ENCODE measurements at regions of chr1 and their contacts with region 1.

Region 1: DNA sequence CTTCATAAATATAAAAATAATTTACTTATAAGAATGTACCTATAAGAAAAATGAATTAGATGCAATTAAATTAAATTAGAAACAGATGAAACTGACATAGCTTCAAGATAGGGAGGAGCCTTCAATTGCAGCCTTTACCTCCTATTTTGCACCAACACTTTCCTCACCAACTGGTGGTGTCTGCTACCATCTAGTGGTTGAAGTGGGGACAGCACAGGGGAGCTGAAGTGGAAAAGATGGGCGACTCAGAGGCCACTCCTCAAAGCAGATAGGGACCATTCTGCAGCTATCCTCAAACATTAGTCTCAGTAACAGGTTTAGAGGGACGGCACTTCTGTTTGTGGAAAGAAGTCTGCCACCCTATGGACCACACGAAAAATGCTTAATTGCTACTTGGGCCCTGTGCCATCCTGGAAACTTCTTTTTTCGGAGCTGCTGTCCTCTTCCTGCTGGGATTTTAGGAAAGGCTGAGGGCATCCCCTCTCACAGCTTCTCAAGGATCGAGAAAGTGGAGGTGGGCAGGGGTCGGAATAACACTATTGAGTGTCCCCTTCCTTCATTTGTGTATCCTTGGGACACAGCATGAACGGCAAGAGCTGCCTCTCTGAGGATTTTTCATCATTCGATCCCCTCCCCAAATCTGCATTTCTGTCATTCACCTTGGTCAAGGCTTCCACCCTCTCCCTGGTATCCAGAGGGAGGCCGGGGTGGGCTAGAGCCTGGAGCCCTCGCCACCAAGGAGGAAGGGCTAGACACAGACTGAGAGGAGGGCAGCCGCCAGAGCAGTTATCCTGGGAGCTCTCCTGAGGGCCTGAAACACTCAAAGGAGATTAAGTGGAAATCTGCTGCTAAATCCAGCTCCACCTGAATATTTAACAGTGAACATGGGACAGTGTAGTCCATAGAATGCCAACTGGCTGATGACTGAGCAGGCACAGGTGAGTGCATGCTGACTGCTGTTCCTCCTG is 9.6 kb downstream of the PROK1 start:
- DNase-seq: peak; percentile 87
- H3K4me3 ChIP-seq: no peak overlapping the region
- H3K27ac ChIP-seq: no peak overlapping the region
- H3K4me1 ChIP-seq: no peaks in the 10 kb centered on the region
- H3K27me3 ChIP-seq: no peaks in the 10 kb centered on the region
- CTCF ChIP-seq: peak; percentile 94 to 96 (median 95)
- EP300 ChIP-seq: no peak
- POLR2A ChIP-seq: no peak

Region 2: DNA sequence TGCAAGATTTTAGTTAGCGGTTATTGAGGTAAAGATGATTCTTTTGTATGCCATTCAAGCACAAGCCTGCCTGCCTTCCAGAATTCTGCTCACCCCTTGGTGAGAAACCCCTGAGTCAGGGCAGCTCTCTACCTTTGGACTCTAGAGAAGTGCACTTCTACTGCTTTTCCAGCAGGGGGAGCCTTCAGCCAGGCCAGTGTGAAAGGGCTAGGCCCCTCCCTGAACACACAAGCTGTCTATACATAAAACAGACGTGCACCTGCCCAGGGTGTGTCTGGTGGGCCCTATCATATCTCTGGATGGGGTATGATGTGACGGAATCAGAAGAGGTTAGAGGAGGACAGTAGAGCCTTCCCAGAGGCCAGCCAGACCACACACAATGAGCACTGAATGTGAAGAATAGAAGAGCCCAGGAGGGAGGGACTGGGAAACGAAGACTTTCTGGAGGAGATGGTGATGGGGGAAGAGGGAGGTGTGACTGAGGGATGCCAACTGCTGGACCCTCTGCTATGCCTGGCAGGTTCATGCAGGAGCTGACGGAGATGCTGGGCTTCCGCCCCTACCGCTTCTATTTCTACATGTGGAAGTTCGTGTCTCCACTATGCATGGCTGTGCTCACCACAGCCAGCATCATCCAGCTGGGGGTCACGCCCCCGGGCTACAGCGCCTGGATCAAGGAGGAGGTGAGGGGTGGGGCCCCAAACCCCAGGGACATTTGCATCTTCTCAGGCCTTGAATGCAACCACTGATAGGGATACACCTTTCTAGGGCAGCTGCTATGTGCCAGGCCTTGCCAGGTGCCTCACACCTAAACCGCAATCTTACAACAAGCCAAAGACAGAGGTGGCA is 263.4 kb before region 1 on chr1:
- in situ Hi-C with region 1: loop called (anchors 5 to 10 kb)
- intact Hi-C with region 1: loop called (anchors 2 kb)
- DNase-seq: no peak
- H3K4me3 ChIP-seq: no peak overlapping the region
- H3K27ac ChIP-seq: no peak overlapping the region
- H3K4me1 ChIP-seq: no peaks in the 10 kb centered on the region
- H3K27me3 ChIP-seq: no peaks in the 10 kb centered on the region
- CTCF ChIP-seq: peak; percentile 75 to 91 (median 88)
- EP300 ChIP-seq: no peak
- POLR2A ChIP-seq: no peak

Region 3: GRCh38 chr1:110203021-110203661 is 257.4 kb before region 1 on chr1:
- in situ Hi-C with region 1: loop called (anchors 5 to 10 kb)
- intact Hi-C with region 1: loop called (anchors 2 kb)
- DNase-seq: peak; percentile 74
- H3K4me3 ChIP-seq: no peak overlapping the region
- H3K27ac ChIP-seq: peak overlapping the region in 3 of 4 donors; percentile 27 to 66 (median 51)
- H3K4me1 ChIP-seq: peaks cover 0 to 12% (median 0%) of the 10 kb centered on the region in 4 donors
- H3K27me3 ChIP-seq: no peaks in the 10 kb centered on the region
- CTCF ChIP-seq: peak; percentile 84 to 94 (median 89)
- EP300 ChIP-seq: no peak
- POLR2A ChIP-seq: no peak

Region 4: GRCh38 chr1:110312188-110313121 is 148.1 kb before region 1 on chr1:
- in situ Hi-C with region 1: loop called in 1 of 4 experiments (anchors 25 kb)
- intact Hi-C with region 1: loop called (anchors 10 kb)
- DNase-seq: peak; percentile 82
- H3K4me3 ChIP-seq: no peak overlapping the region
- H3K27ac ChIP-seq: no peak overlapping the region
- H3K4me1 ChIP-seq: peaks cover 2 to 8% (median 5%) of the 10 kb centered on the region in 4 donors
- H3K27me3 ChIP-seq: no peaks in the 10 kb centered on the region
- CTCF ChIP-seq: peak; percentile 89 to 95 (median 90)
- EP300 ChIP-seq: no peak
- POLR2A ChIP-seq: no peak

Region 5: DNA sequence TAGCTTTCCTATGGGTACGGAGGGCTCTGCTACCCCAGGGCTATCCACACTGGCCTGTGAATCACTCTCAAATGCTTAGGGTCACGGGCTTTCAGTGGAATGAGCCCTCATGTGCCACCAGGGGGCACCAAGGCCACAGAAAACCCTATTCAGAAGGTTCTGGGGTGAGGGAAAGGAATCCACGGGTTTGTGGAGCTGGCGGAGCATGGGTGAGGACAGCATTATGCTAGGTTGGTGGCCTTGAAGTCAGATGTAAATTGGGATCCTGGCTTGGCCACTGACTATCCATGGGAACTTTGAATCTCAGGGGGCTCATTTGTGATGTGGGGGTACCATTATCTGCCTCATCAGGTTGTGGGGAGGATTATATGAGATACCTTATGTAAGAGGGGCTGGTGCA is 48.0 kb before region 1 on chr1:
- in situ Hi-C with region 1: no loop called
- intact Hi-C with region 1: loop called (anchors 5 kb)
- DNase-seq: peak; percentile 67
- H3K4me3 ChIP-seq: no peak overlapping the region
- H3K27ac ChIP-seq: no peak overlapping the region
- H3K4me1 ChIP-seq: peaks cover 0 to 10% (median 6%) of the 10 kb centered on the region in 4 donors
- H3K27me3 ChIP-seq: no peaks in the 10 kb centered on the region
- CTCF ChIP-seq: peak; percentile 55 to 68 (median 65)
- EP300 ChIP-seq: no peak
- POLR2A ChIP-seq: no peak

Region 6: GRCh38 chr1:110420874-110421793 is 39.4 kb before region 1 on chr1:
- in situ Hi-C with region 1: loop called in 1 of 4 experiments (anchors 5 kb)
- intact Hi-C with region 1: no loop called
- DNase-seq: no peak
- H3K4me3 ChIP-seq: no peak overlapping the region
- H3K27ac ChIP-seq: no peak overlapping the region
- H3K4me1 ChIP-seq: no peaks in the 10 kb centered on the region
- H3K27me3 ChIP-seq: no peaks in the 10 kb centered on the region
- CTCF ChIP-seq: no peak
- EP300 ChIP-seq: no peak
- POLR2A ChIP-seq: no peak

Region 7: DNA sequence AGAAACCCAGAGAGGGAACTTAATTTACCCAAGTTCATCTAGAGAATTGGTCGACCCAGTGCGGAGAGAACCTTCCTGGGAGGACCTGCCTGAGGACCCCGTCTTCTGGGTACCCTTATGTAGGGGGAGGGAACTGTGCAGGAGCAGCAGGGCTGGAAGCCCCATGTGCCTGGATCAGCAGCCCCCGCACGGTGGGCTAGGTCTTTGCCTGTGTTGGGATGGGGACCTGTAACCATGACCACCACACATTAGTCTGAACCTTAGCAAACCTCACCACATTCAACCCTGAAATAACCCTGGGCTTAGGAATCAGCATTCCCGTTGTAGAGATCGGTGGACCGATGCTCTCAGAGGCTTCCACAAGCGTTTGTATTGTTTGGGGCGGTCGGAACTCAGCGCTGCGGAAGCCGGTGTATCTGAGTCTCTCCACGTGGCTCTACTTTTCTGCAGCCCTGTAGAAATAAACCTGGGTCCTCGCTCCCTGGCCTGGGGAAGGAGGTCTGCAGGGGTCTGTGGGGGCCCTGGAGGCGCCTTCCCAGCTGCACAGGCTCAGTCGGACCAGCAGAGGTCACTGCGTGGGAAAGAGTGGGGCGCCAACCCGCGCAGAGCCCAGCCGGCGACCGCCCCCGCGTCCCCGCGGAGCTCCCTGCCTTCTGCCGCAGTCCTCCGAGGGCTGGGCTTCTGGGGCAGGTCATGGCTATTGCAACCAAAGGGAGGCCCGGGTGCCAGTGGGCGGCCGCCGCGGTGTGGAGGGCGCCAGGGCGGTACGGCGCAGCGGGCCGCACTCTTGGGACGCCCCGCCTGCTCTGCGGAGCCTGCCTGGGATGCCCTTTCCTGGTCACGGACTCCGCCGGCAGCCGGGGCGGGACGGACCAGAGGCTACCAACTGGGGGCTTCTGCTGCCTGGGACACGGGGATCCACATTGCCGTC is 94.6 kb after region 1 on chr1:
- in situ Hi-C with region 1: no loop called
- intact Hi-C with region 1: no loop called
- DNase-seq: peak; percentile 36
- H3K4me3 ChIP-seq: peak overlapping the region in 2 of 4 donors; percentile 26 to 46
- H3K27ac ChIP-seq: peak overlapping the region in 3 of 4 donors; percentile 6 to 10 (median 8)
- H3K4me1 ChIP-seq: peaks cover 0 to 11% (median 8%) of the 10 kb centered on the region in 4 donors
- H3K27me3 ChIP-seq: peaks cover 54% of the 10 kb centered on the region
- CTCF ChIP-seq: peak; percentile 64 to 73 (median 67)
- EP300 ChIP-seq: no peak
- POLR2A ChIP-seq: no peak

Measured in transverse colon (tissue), 4 donors.